CD8-positive, alpha-beta memory T cell (primary cell): ENCODE measurements at regions of chr9 and their contacts with region 1.

Region 1: DNA sequence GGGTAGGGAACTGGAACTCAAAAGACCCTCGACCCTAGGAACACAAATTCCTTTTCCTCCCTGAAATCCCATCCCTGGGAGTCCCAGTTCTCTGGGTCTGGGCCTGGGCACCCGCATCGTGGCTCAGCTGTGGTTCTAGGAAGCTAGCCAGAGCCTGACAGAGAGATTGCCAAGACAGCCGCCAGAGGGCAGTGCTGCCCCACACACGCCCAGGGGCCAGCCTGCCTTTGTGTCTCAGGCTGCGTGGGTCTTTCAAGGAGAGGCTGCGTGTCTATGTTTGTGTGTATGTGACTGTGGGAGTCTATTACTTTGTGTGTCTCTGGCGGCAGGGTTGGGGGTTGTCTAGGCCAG is 32.0 kb upstream of the TTLL11 start:
- DNase-seq: peak; percentile 60 to 80 (median 66)
- H3K4me3 ChIP-seq: no peak overlapping the region
- H3K4me3 Mint-ChIP-seq: peak overlapping the region in 5 of 7 donors; percentile 6 to 67 (median 65)
- H3K27ac ChIP-seq: no peak overlapping the region
- H3K27ac Mint-ChIP-seq: peak overlapping the region in 2 of 8 donors; percentile 2 to 77
- H3K4me1 ChIP-seq: peaks cover 5% of the 10 kb centered on the region
- H3K4me1 Mint-ChIP-seq: peaks cover 21 to 41% (median 22%) of the 10 kb centered on the region in 3 donors
- H3K27me3 ChIP-seq: peaks cover 15% of the 10 kb centered on the region
- H3K27me3 Mint-ChIP-seq: peaks cover 30 to 44% of the 10 kb centered on the region in 2 donors

Region 2: GRCh38 chr9:122144836-122145591 is 19.9 kb after region 1 on chr9:
- CTCF ChIA-PET with region 1: interaction called, 17 read pairs
- POLR2A ChIA-PET with region 1: no interaction called
- DNase-seq: no peak
- H3K4me3 ChIP-seq: no peak overlapping the region
- H3K4me3 Mint-ChIP-seq: no peak overlapping the region
- H3K27ac ChIP-seq: no peak overlapping the region
- H3K27ac Mint-ChIP-seq: no peak overlapping the region
- H3K4me1 ChIP-seq: no peaks in the 10 kb centered on the region
- H3K4me1 Mint-ChIP-seq: peaks cover 0 to 3% (median 0%) of the 10 kb centered on the region in 3 donors
- H3K27me3 ChIP-seq: no peaks in the 10 kb centered on the region
- H3K27me3 Mint-ChIP-seq: no peaks in the 10 kb centered on the region

Region 3: GRCh38 chr9:122286764-122287163 is 161.6 kb after region 1 on chr9:
- CTCF ChIA-PET with region 1: no interaction called
- POLR2A ChIA-PET with region 1: no interaction called
- DNase-seq: no peak
- H3K4me3 ChIP-seq: no peak overlapping the region
- H3K4me3 Mint-ChIP-seq: no peak overlapping the region
- H3K27ac ChIP-seq: no peak overlapping the region
- H3K27ac Mint-ChIP-seq: no peak overlapping the region
- H3K4me1 ChIP-seq: no peaks in the 10 kb centered on the region
- H3K4me1 Mint-ChIP-seq: peaks cover 0 to 3% (median 0%) of the 10 kb centered on the region in 3 donors
- H3K27me3 ChIP-seq: no peaks in the 10 kb centered on the region
- H3K27me3 Mint-ChIP-seq: no peaks in the 10 kb centered on the region

Region 4: DNA sequence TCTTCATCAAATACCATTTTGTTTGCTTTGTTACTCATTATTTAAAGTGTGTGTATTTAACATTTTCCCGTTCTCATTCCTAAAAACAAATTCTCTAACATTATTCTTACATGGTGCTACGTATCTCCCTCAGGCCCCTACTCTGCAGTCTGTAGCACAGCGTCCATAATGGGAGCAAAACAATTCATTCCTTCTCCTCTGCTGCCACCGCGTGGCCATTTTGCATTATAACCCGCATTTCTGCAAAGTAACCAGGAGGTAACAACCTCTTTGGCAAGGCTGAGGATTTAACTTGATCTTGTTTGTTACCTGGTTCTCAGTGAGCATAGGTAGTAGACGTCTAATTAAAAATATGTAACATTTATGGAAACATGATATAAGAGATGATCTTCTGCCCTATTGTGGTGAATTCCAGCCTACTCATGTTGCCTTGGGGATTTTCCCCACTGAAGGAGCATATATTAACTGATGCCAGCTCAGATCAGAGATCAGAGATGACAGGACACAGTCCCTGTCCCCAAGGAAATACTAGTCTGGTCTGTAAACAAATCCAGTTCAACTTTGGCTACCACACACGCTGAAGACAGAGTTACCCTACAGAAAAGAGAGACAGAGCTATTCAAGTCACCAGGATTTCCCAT is 685.3 kb after region 1 on chr9:
- CTCF ChIA-PET with region 1: interaction called, 10 read pairs
- POLR2A ChIA-PET with region 1: no interaction called
- DNase-seq: peak; percentile 57 to 79 (median 58)
- H3K4me3 ChIP-seq: no peak overlapping the region
- H3K4me3 Mint-ChIP-seq: no peak overlapping the region
- H3K27ac ChIP-seq: no peak overlapping the region
- H3K27ac Mint-ChIP-seq: no peak overlapping the region
- H3K4me1 ChIP-seq: peaks cover 6% of the 10 kb centered on the region
- H3K4me1 Mint-ChIP-seq: peaks cover 15 to 29% (median 21%) of the 10 kb centered on the region in 3 donors
- H3K27me3 ChIP-seq: no peaks in the 10 kb centered on the region
- H3K27me3 Mint-ChIP-seq: no peaks in the 10 kb centered on the region